ENCODE measurements at regions of chr6 and their contacts with region 1.

Region 1: GRCh38 chr6:17845598-17845997 is 138.9 kb upstream of the NUP153 start:
- DNase-seq: no peak
- ATAC-seq: peak in 1 of 2 donors; percentile 21
- H3K4me3 ChIP-seq: no peak overlapping the region
- H3K27ac ChIP-seq: no peak overlapping the region
- H3K4me1 ChIP-seq: no peaks in the 10 kb centered on the region
- H3K27me3 ChIP-seq: no peaks in the 10 kb centered on the region
- CTCF ChIP-seq: no peak

Region 2: GRCh38 chr6:17705428-17705777 is 140.2 kb before region 1 on chr6:
- intact Hi-C with region 1: no loop called
- DNase-seq: no peak
- ATAC-seq: peak; percentile 20 to 51
- H3K4me3 ChIP-seq: peak overlapping the region; percentile 91
- H3K27ac ChIP-seq: peak overlapping the region; percentile 100
- H3K4me1 ChIP-seq: peaks cover 53% of the 10 kb centered on the region
- H3K27me3 ChIP-seq: no peaks in the 10 kb centered on the region
- CTCF ChIP-seq: no peak

Region 3: GRCh38 chr6:17987576-17988421 is 142.2 kb after region 1 on chr6 and contains the start of gene KIF13A:
- intact Hi-C with region 1: loop called (anchors 10 kb)
- DNase-seq: peak; percentile 81
- ATAC-seq: peak; percentile 86
- H3K4me3 ChIP-seq: peak within 1 kb of the TSS; percentile 69
- H3K27ac ChIP-seq: peak within 1 kb of the TSS; percentile 95
- H3K4me1 ChIP-seq: peaks cover 38% of the 10 kb centered on the region
- H3K27me3 ChIP-seq: no peaks in the 10 kb centered on the region
- CTCF ChIP-seq: peak; percentile 23
- total RNA-seq, gene KIF13A: 55.2 TPM

Region 4: DNA sequence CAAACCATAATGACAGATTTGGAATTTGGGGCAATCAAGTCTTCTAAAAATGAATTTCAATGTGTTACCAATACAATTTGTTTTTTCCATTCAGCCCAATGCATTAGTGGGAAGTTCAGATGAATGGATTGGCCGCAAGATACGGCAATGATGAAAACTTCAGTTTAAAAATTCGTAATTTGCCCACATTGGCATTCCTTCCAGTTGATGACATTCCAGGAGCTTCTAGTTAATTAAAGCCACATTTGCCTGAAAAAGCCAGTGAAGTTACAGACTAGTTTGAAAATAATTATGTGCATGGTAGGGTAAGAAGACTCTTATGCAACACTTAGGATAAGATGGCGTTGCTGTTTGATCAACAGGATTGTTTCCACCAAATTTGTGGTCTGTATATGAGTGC is 230.6 kb after region 1 on chr6:
- intact Hi-C with region 1: no loop called
- DNase-seq: no peak
- ATAC-seq: no peak
- H3K4me3 ChIP-seq: no peak overlapping the region
- H3K27ac ChIP-seq: no peak overlapping the region
- H3K4me1 ChIP-seq: no peaks in the 10 kb centered on the region
- H3K27me3 ChIP-seq: no peaks in the 10 kb centered on the region
- CTCF ChIP-seq: no peak